Mammary epithelial cell (primary cell): ENCODE measurements at regions of chr3 and their contacts with region 1.

Region 1: DNA sequence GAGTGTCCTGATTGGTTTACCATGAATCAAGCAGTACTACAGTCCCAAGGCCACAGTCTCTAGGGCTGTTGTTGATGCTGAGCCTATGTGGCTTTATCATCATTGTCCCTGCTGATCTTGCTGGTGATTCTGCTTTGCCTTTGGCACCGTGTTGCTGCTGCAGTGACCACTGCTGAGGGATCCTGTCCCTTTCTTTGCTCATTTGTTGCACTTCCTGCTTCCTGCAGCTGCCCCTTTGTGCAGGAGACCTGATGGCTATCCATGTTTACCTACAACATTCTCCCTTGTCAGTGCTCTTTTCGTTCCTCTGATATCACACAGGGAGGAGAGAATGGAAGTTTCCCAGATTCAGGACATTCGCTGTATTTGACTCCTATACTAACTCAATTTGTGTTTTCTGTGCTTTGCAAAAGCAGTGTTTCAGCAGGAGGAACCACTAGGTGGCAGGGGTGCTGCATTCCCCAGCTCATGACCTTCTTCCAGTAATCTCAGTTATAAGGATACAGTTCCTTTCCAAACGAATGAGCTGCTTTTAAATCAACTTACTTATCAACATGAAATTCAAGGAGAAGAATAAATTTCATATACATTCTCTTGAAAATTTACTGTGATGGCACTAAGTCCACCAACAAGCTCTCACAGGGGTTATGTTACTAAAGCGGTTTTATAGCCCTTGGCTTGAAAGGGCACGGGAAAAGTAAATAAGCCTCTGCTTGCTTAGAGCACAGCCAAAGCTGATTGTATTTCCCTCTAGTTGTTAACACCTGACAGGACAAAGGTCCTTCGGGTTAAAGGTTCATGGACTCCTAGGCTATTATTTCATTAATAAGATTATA is 9.7 kb upstream of the THUMPD3 start:
- DNase-seq: peak; percentile 44
- H3K4me3 ChIP-seq: no peak overlapping the region
- H3K27ac ChIP-seq: no peak overlapping the region
- H3K4me1 ChIP-seq: peaks cover 44% of the 10 kb centered on the region
- H3K27me3 ChIP-seq: no peaks in the 10 kb centered on the region
- CTCF ChIP-seq: peak; percentile 93 to 99

Region 2: GRCh38 chr3:8970971-8971589 is 382.1 kb before region 1 on chr3:
- CTCF ChIA-PET with region 1: no interaction called
- dilution Hi-C with region 1: no loop called
- in situ Hi-C with region 1: no loop called
- intact Hi-C with region 1: loop called (anchors 2 kb)
- DNase-seq: peak; percentile 48
- H3K4me3 ChIP-seq: no peak overlapping the region
- H3K27ac ChIP-seq: no peak overlapping the region
- H3K4me1 ChIP-seq: no peaks in the 10 kb centered on the region
- H3K27me3 ChIP-seq: no peaks in the 10 kb centered on the region
- CTCF ChIP-seq: peak; percentile 98 to 99

Region 3: DNA sequence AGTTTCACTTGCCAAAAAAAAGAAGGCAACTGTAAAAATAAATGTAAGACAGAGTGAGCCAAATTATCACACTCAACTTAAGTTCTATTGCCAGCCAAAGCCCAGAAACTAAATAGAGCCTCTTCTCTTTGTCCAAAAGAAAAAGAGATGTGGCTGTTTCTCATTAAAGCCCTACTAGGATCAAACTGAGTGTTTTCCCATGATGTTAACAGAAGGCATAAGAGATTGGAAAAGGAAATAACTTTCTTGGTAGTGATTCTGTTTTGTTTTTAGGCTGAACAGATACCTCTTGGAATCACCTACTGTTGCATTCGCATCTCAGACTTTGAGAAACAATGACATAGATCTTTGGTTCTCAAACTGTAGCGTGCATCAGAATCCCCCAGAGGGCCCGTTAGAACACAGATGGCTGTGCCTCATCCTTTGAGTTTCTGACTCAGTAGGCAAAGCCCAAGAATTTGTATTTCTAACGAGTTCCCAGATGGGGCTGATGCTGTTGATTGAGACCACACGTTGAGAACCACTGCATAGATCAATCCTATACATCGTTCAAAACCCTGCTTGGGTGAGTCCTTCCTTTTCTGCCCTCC is 61.2 kb before region 1 on chr3:
- CTCF ChIA-PET with region 1: no interaction called
- dilution Hi-C with region 1: no loop called
- in situ Hi-C with region 1: no loop called
- intact Hi-C with region 1: no loop called
- DNase-seq: no peak
- H3K4me3 ChIP-seq: no peak overlapping the region
- H3K27ac ChIP-seq: no peak overlapping the region
- H3K4me1 ChIP-seq: no peaks in the 10 kb centered on the region
- H3K27me3 ChIP-seq: no peaks in the 10 kb centered on the region
- CTCF ChIP-seq: no peak

Region 4: GRCh38 chr3:9422712-9423424 is 69.7 kb after region 1 on chr3:
- CTCF ChIA-PET with region 1: no interaction called
- dilution Hi-C with region 1: no loop called
- in situ Hi-C with region 1: no loop called
- intact Hi-C with region 1: loop called (anchors 1 kb)
- DNase-seq: peak; percentile 98
- H3K4me3 ChIP-seq: peak overlapping the region; percentile 7 to 50 (median 26)
- H3K27ac ChIP-seq: peak overlapping the region; percentile 93
- H3K4me1 ChIP-seq: peaks cover 49% of the 10 kb centered on the region
- H3K27me3 ChIP-seq: no peaks in the 10 kb centered on the region
- CTCF ChIP-seq: peak; percentile 69 to 74

Region 5: DNA sequence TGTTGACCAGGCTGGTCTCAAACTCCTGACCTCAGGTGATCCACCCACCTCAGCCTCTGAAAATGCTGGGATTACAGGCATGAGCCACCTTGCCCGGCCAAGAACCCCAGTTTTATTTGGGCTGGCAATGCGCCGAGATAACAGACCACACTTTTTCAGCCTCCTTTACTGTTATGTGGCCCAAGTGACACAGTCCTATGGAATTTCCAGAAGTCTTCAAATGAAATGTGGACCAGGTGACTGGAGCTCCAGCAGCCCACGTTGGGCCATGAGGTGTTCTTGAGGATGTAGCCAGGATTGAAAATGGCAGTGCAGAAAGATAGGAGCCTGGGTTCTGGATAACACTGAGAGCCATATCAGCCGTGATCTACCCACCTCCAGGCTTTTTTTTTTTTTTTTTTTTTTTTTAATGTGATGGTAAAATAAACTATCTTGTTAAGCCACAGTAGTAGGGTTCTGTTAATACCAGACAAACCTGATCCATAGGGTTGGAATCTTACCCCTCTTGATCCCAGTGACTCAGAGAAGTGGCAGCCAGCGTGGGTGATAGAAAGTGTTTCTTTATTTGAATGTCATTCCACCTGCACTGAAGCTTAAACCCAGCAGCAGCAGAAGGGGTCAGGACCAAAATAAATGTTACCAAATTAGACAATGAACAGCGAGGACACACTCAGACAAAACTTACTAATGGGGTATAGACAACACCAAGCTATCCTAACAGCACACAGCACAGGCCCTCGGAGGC is 144.9 kb after region 1 on chr3:
- CTCF ChIA-PET with region 1: no interaction called
- dilution Hi-C with region 1: no loop called
- in situ Hi-C with region 1: no loop called
- intact Hi-C with region 1: loop called (anchors 2 kb)
- DNase-seq: peak; percentile 85
- H3K4me3 ChIP-seq: no peak overlapping the region
- H3K27ac ChIP-seq: peak overlapping the region; percentile 19
- H3K4me1 ChIP-seq: peaks cover 34% of the 10 kb centered on the region
- H3K27me3 ChIP-seq: no peaks in the 10 kb centered on the region
- CTCF ChIP-seq: no peak

Region 6: GRCh38 chr3:9731206-9732079 is 378.3 kb after region 1 on chr3 and contains the start of gene BRPF1:
- CTCF ChIA-PET with region 1: interaction called, 16 read pairs
- dilution Hi-C with region 1: no loop called
- in situ Hi-C with region 1: no loop called
- intact Hi-C with region 1: loop called (anchors 10 kb)
- DNase-seq: peak; percentile 99
- H3K4me3 ChIP-seq: peak within 1 kb of the TSS; percentile 85 to 95 (median 87)
- H3K27ac ChIP-seq: peak within 1 kb of the TSS; percentile 99
- H3K4me1 ChIP-seq: peaks cover 13% of the 10 kb centered on the region
- H3K27me3 ChIP-seq: no peaks in the 10 kb centered on the region
- CTCF ChIP-seq: peak in 1 of 2 donors; percentile 36
- total RNA-seq, gene BRPF1: 16.5 to 21.2 TPM